H1 (cell line): ENCODE measurements at regions of chr19 and their contacts with region 1.

Region 1: DNA sequence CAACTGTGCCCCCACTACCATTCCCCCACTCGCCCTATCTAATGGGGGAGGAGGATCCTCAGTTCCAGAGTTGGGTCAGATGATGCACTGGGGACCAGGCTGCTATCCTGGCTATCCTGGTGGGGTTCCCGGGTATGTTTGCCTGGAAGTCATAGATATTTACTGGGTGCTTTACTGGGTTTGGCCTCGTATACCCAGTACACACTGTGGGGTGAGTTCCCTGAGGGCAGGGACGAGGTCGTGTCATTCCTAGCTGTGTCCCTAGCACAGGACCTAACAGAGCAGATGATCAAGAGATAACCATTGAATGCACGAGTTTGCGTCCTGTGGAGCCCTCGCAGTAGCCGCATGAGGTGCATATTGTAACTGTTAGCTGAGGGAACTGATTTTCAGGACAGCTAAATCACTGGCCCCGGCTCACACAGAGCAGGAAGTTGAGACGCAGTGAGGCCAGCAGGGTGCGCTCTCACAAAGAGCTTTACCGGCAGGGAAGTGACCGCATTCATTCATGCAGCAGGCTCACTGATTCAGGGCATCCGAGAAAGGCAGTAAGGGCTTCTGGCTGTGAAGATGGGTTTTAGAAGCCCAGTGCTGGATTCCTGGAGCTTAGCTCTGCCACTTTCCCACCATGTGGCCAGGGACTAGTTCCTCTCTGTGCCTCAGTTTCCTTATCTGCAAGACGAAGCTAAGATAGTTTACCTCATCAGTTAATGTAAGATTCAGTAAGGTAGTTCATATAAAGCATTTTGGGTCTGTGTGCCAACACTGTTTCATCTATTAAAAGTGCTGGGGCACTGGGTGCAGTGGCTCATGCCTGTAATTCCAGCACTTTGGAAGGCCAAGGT is 6.0 kb downstream of the RUVBL2 start:
- DNase-seq: peak; percentile 59 to 88
- H3K4me3 ChIP-seq: no peak overlapping the region
- H3K27ac ChIP-seq: no peak overlapping the region
- H3K4me1 ChIP-seq: peaks cover 0 to 6% (median 2%) of the 10 kb centered on the region in 4 experiments; a peak in 2 of 7 replicates
- H3K27me3 ChIP-seq: no peaks in the 10 kb centered on the region
- CTCF ChIP-seq: peak; percentile 81 to 98 (median 97)
- EP300 ChIP-seq: no peak
- POLR2A ChIP-seq: no peak
- RAD21 ChIP-seq: peak; percentile 69 to 72

Region 2: GRCh38 chr19:48987423-48987722 is 12.3 kb before region 1 on chr19:
- CTCF ChIA-PET with region 1: interaction called, 12 read pairs
- POLR2A ChIA-PET with region 1: interaction called, 3 read pairs
- DNase-seq: no peak
- H3K4me3 ChIP-seq: no peak overlapping the region
- H3K27ac ChIP-seq: no peak overlapping the region
- H3K4me1 ChIP-seq: peaks cover 0 to 1% (median 0%) of the 10 kb centered on the region in 4 experiments; a peak in 2 of 7 replicates
- H3K27me3 ChIP-seq: no peaks in the 10 kb centered on the region
- CTCF ChIP-seq: no peak
- EP300 ChIP-seq: no peak
- POLR2A ChIP-seq: no peak
- RAD21 ChIP-seq: no peak

Region 3: DNA sequence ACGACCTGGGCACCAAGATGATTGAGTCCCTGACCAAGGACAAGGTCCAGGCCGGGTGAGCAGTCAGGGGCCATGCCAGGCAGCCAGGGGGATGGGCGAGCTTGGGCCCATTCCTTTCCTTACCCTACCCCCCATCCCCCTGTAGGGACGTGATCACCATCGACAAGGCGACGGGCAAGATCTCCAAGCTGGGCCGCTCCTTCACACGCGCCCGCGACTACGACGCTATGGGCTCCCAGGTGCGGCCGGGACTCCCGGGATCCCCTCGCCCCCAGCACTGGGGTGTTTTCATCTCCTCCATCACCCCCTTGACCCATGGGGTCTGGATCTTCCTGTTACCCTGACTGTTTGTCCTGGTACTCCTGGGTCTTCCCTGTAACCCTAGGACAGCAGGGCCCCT is 10.1 kb after region 1 on chr19:
- CTCF ChIA-PET with region 1: interaction called, 66 read pairs
- POLR2A ChIA-PET with region 1: interaction called, 11 read pairs
- DNase-seq: no peak
- H3K4me3 ChIP-seq: no peak overlapping the region
- H3K27ac ChIP-seq: no peak overlapping the region
- H3K4me1 ChIP-seq: no peaks in the 10 kb centered on the region
- H3K27me3 ChIP-seq: no peaks in the 10 kb centered on the region
- CTCF ChIP-seq: no peak
- EP300 ChIP-seq: no peak
- POLR2A ChIP-seq: no peak
- RAD21 ChIP-seq: no peak

Region 4: DNA sequence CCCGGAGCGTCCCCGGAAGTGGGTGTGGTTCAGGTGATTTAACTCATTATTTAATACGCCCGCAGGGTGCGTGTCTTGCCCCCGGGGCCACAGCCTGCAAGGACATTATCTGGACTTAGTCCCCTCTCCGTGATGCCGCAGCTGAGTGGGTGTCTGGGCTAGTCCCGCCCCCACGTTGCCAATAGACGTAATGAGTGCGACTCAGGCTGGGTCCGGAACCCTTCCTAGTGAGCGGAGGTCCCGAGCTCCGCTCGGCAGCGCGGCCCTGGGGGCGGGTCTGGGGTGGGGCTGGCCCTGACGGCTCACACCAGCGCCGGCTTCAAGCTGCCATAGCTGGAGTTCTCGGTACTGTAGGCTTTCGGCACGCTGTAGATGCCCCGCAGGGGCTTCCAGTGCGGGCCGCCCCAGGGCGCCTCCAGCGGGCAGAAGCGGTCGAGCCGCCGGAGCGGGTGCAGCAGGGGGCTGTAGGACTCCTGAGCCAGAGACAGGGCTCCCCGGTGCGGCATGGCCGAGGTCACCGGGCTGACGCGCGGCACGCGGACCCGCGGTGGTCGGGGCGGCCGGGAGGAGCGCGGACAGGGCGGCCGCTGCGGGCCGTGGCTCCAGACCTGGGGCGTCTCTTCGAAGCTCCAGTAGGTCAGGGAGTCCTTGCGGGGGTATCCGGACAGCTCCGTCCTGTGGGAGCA is 18.1 kb after region 1 on chr19:
- CTCF ChIA-PET with region 1: interaction called, 46 read pairs
- POLR2A ChIA-PET with region 1: interaction called, 11 read pairs
- DNase-seq: peak in 1 of 2 experiments; percentile 78
- H3K4me3 ChIP-seq: peak overlapping the region; percentile 27 to 68 (median 40)
- H3K27ac ChIP-seq: no peak overlapping the region
- H3K4me1 ChIP-seq: peaks cover 0 to 17% (median 8%) of the 10 kb centered on the region in 4 experiments; a peak in 5 of 7 replicates
- H3K27me3 ChIP-seq: peaks cover 0 to 15% (median 12%) of the 10 kb centered on the region in 4 experiments; a peak in 6 of 7 replicates
- CTCF ChIP-seq: peak; percentile 8 to 35 (median 32)
- EP300 ChIP-seq: no peak
- POLR2A ChIP-seq: no peak
- RAD21 ChIP-seq: no peak; a peak in 1 of 4 replicates

Region 5: GRCh38 chr19:49058562-49058961 is 58.9 kb after region 1 on chr19:
- CTCF ChIA-PET with region 1: interaction called, 25 read pairs
- POLR2A ChIA-PET with region 1: no interaction called
- DNase-seq: no peak
- H3K4me3 ChIP-seq: no peak overlapping the region
- H3K27ac ChIP-seq: no peak overlapping the region
- H3K4me1 ChIP-seq: peaks cover 0 to 11% (median 10%) of the 10 kb centered on the region in 4 experiments; a peak in 6 of 7 replicates
- H3K27me3 ChIP-seq: peaks cover 10 to 48% (median 44%) of the 10 kb centered on the region in 4 experiments
- CTCF ChIP-seq: no peak
- EP300 ChIP-seq: no peak
- POLR2A ChIP-seq: no peak
- RAD21 ChIP-seq: no peak

Region 6: GRCh38 chr19:49073514-49074378 is 74.0 kb after region 1 on chr19:
- CTCF ChIA-PET with region 1: interaction called, 26 read pairs
- POLR2A ChIA-PET with region 1: no interaction called
- DNase-seq: peak in 1 of 2 experiments; percentile 60
- H3K4me3 ChIP-seq: no peak overlapping the region
- H3K27ac ChIP-seq: no peak overlapping the region
- H3K4me1 ChIP-seq: peaks cover 0 to 2% (median 0%) of the 10 kb centered on the region in 4 experiments; a peak in 2 of 7 replicates
- H3K27me3 ChIP-seq: peaks cover 26 to 49% (median 47%) of the 10 kb centered on the region in 4 experiments
- CTCF ChIP-seq: peak; percentile 57 to 64 (median 61)
- EP300 ChIP-seq: no peak
- POLR2A ChIP-seq: no peak
- RAD21 ChIP-seq: peak; percentile 40 to 43